PC-9 (cell line): ENCODE measurements at regions of chr12 and their contacts with region 1.

Region 1: DNA sequence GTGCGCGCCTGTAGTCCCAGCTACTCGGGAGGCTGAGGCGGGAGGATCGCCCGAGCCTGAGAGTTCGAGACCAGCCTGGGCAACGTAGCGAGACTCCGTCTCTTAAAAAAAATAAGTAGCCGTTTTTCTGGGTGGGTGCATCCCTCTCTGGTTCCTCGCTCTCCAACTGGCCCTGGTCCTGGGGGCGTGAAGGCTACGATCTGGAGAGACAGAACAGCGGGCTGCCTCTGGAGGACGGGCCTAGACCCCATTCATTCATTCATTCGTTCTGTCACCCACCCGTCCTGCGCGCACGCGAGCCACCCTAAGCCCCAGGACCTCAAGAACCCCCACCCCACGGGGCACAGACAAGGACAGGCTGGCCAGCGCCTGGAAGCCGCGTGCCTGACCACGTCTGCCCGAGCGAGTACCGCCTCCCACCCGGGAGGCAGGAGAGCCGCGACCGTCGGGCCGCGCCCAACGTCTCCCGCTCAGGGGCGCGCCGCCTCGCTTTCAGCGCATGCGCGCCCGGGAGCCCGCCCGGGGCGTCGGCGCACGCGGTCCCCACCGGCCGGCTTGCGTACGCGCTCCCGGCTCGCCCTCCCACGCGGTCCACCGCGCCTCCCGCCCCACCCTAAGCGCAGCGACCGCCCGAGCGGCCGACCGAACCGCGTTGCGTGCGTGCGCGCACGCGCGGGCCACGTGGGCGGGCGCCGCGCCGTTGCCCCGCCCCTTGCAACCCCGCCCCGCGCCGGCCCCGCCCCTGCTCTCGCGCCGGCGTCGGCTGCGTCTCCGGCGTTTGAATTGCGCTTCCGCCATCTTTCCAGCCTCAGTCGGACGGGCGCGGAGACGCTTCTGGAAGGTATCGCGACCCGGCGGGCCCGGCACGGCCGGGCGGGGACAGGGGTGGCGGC is at the start of gene RAN:
- DNase-seq: peak; percentile 63 to 91
- H3K4me3 ChIP-seq: peak within 1 kb of the TSS; percentile 99
- H3K27ac ChIP-seq: peak within 1 kb of the TSS; percentile 80
- H3K4me1 ChIP-seq: peaks cover 15% of the 10 kb centered on the region
- H3K27me3 ChIP-seq: no peaks in the 10 kb centered on the region
- CTCF ChIP-seq: no peak
- total RNA-seq, gene RAN: 894 and 1,079 TPM in 2 replicates

Region 2: DNA sequence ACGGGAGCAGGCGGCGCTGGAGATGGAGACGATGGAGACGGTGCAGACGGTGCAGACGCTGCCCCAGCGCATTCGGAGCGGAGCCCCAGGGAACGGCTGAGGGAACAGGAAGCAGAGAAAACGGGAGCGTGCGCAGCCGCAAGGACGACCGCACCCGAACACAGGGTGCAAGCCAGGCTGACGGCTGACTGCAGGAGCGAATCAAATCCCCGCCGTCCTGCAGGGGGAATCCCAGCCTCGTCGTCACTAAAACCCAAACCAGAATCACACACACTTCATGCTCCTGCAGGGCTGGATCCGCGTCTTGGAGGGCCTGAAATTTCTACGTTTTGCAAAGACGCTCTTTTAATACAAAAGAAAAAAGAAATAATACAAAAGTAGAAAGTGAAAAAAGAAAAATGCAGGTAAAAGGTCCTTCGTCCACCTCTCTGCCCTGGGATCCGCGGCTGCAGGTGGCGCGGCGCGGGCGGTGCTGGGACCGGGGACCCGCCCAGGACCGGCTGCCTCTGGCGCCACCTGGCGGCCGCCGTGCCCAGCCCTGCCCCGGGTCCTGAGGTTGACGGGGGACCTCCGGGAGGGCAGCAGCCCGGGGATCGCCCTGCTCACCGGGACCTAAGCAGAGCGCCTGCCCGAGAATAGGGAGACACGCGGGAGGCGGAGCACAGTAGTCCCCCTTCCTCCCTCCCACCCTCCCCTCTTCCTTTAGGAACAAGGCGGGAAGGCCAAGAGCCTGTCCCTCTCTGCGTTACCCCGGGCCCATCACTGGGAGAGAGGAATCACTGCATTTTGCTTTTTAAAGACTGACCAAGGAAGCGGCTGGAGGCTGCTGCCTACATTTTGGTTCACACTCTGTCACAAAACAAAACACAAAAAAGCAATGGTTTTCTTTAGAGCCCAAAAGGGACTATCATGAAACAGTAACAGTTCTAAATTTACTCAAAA is 52.6 kb before region 1 on chr12:
- CTCF ChIA-PET with region 1: no interaction called
- POLR2A ChIA-PET with region 1: no interaction called
- intact Hi-C with region 1: loop called (anchors 5 kb)
- DNase-seq: peak in 1 of 2 experiments; percentile 77
- H3K4me3 ChIP-seq: peak overlapping the region; percentile 58
- H3K27ac ChIP-seq: no peak overlapping the region
- H3K4me1 ChIP-seq: no peaks in the 10 kb centered on the region
- H3K27me3 ChIP-seq: no peaks in the 10 kb centered on the region
- CTCF ChIP-seq: peak; percentile 75

Region 3: DNA sequence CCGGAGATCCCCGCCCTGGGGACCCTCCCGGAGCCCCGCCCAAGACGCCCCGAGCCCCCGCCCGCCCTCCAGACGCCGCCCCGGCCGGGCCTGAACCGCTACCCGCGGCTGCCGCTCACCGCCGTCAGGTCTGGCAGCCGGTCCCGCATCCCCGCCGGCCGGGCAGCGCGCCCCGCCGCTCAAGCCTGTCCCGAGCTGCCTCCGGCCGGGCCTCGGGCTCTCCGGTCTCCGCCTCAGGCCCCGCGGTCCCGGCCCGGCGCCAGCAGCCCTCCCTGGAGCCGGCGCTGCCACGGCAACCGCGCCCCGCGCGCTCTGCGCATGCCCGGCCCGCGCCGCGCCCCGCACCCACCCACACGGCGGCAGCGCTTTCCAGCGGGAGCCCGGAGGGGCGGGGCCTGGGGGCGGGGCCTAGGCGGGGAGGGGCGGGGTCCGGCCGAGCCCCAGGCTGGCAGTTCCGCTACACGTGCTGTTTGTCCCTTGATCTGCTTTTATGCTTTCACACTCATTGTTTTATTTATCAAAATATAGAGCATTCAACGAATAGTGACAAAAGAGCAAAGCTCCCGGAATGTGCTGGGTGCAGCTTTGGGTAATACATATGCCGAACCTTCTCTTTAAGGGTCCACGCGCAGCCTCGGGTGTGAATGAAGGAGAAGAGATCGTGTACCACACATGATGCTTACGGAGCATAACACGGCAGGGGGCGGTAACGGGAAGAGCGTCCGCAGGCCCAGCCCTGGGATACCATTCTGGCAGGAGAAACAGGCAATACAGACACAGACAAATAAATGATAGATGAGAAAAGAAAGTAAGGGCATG is 32.4 kb before region 1 on chr12 and contains the start of gene STX2:
- CTCF ChIA-PET with region 1: no interaction called
- POLR2A ChIA-PET with region 1: no interaction called
- intact Hi-C with region 1: loop called (anchors 5 kb)
- DNase-seq: peak in 1 of 2 experiments; percentile 86
- H3K4me3 ChIP-seq: peak within 1 kb of the TSS; percentile 54
- H3K27ac ChIP-seq: no peak within 1 kb of the TSS
- H3K4me1 ChIP-seq: 0 out of 2 replicates have a peak, but pooled peaks cover 5% of the 10 kb centered on the region
- H3K27me3 ChIP-seq: no peaks in the 10 kb centered on the region
- CTCF ChIP-seq: no peak
- total RNA-seq, gene STX2: 8.2 and 9.7 TPM in 2 replicates